ENCODE measurements at regions of chr20 and their contacts with region 1.

Region 1: DNA sequence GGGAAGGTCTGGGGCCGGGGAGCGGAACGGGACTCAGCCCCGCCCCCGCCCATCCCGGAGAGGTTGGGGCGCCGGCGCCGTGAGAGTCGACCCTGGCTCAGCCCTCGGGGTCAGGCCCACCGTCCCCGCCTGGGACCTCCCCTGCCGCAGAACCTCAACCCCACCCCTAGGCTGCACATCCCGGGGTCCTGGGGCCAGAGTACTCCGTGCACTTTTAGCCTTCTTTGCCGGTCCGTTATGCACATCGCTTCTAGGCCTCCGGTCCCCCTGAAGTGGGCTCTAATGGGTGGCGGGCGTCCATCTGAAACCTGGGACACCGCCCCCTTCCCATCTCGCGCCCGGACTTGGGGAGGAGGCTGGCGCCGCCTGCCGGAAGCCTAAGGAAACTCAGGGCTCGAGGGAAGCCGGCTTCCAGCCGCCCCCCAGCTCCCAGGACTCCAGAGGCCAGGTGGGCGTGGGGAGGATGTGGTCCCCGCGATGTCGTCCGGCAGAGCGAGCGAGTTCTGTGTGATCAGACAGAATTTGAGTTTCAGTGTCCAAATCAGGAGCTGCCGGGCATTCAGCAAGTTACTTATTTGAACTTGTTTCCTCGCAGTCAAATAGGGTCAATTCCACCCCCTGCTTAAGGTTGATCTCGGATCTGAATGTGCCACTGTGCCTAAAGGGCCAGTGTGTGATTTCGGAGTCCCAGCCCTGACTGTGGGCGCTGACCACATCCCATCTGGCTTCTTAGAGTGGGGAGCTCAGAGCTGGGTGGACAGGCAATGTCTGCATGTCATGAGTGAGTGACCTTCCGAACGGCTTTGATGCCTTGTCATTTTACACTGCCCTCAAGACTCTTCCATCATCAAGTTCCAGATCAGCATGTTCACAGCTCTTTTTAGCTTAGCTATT is 47.6 kb downstream of the CPXM1 start:
- DNase-seq: peak; percentile 58
- ATAC-seq: peak; percentile 35
- H3K4me3 Mint-ChIP-seq: peak overlapping the region; percentile 74
- H3K27ac Mint-ChIP-seq: no peak overlapping the region
- H3K4me1 Mint-ChIP-seq: peaks cover 31% of the 10 kb centered on the region
- H3K27me3 Mint-ChIP-seq: peaks cover 29% of the 10 kb centered on the region
- CTCF ChIP-seq: peak; percentile 76

Region 2: DNA sequence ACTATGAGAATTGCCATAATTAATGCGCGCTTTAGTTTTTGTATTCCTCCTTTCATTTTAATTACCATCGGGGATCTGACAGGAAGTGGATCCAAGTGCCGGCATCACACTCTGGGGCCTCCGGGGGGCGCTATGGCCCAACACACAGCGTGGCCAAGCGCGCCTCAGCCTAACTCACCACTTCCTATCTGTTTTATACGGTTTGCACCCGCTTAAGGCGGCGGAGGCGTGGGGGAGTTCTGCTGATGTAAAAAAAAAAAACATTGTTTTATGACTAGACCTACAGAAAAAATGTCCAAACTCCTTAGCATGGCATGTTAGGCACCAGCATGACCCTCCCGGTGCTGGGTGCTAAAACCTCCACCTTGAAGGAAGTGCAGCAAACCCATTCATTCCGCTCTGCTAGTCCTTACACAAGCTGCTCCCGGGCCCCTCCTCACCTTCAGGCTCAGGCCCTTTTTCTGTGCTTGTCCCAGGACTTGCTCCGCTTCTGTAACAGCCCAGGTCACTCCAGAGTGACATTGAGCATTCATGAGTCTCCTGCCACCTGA is 64.7 kb before region 1 on chr20:
- CTCF ChIA-PET with region 1: interaction called, 55 read pairs
- POLR2A ChIA-PET with region 1: no interaction called
- intact Hi-C with region 1: no loop called
- DNase-seq: peak; percentile 94
- ATAC-seq: peak; percentile 95
- H3K4me3 Mint-ChIP-seq: no peak overlapping the region
- H3K27ac Mint-ChIP-seq: no peak overlapping the region
- H3K4me1 Mint-ChIP-seq: peaks cover 22% of the 10 kb centered on the region
- H3K27me3 Mint-ChIP-seq: peaks cover 31% of the 10 kb centered on the region
- CTCF ChIP-seq: peak; percentile 94

Region 3: GRCh38 chr20:2693286-2694000 is 59.4 kb before region 1 on chr20:
- CTCF ChIA-PET with region 1: interaction called, 55 read pairs
- POLR2A ChIA-PET with region 1: interaction called, 4 read pairs
- intact Hi-C with region 1: no loop called
- DNase-seq: peak; percentile 47
- ATAC-seq: peak; percentile 69
- H3K4me3 Mint-ChIP-seq: no peak overlapping the region
- H3K27ac Mint-ChIP-seq: no peak overlapping the region
- H3K4me1 Mint-ChIP-seq: peaks cover 12% of the 10 kb centered on the region
- H3K27me3 Mint-ChIP-seq: peaks cover 42% of the 10 kb centered on the region
- CTCF ChIP-seq: no peak

Region 4: DNA sequence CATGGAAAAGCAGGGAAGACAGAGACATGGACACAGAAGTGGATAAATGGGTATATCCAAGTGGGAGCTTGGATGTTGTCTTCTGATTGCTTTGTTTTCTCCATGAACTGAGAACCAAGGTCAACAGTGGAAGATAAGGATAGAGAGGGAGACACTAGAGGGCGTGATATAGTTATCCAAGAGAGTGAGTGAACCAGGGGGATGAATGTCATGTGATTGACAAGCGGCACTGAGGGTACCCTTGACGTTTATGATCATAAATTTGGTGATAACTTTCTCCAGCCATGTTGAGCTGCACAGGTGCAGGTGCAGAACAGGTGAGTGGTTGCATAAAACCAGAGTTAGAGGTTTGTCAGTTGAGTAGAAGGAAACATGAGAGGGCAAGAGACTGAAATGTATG is 39.5 kb before region 1 on chr20:
- CTCF ChIA-PET with region 1: interaction called, 17 read pairs
- POLR2A ChIA-PET with region 1: no interaction called
- intact Hi-C with region 1: no loop called
- DNase-seq: no peak
- ATAC-seq: peak; percentile 80
- H3K4me3 Mint-ChIP-seq: no peak overlapping the region
- H3K27ac Mint-ChIP-seq: no peak overlapping the region
- H3K4me1 Mint-ChIP-seq: no peaks in the 10 kb centered on the region
- H3K27me3 Mint-ChIP-seq: no peaks in the 10 kb centered on the region
- CTCF ChIP-seq: peak; percentile 36

Region 5: DNA sequence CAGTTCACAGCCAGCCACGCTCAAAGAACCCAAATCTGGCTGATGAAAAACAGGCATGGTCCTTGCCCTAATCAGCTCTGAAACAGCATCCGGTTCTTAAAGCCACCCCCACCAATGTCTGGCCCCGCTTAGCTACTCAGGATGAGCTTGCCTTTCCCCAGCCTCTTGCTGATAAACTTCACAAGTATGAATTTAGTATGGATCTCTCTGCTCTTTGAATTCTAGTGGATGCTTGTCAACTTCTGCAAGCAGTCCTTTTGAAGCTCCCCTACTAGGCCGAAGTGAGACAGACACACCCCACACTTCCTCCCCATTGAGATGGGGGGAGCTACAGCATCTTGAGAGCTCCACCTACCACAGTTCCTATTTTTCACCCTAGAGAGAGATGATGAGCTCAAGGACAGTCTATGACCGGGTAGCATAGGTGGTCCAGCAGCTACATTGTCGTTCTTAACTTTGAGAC is 23.5 kb before region 1 on chr20:
- CTCF ChIA-PET with region 1: interaction called, 22 read pairs
- POLR2A ChIA-PET with region 1: interaction called, 4 read pairs
- intact Hi-C with region 1: no loop called
- DNase-seq: peak; percentile 48
- ATAC-seq: peak; percentile 96
- H3K4me3 Mint-ChIP-seq: peak overlapping the region; percentile 33
- H3K27ac Mint-ChIP-seq: peak overlapping the region; percentile 85
- H3K4me1 Mint-ChIP-seq: peaks cover 19% of the 10 kb centered on the region
- H3K27me3 Mint-ChIP-seq: no peaks in the 10 kb centered on the region
- CTCF ChIP-seq: no peak

Region 6: DNA sequence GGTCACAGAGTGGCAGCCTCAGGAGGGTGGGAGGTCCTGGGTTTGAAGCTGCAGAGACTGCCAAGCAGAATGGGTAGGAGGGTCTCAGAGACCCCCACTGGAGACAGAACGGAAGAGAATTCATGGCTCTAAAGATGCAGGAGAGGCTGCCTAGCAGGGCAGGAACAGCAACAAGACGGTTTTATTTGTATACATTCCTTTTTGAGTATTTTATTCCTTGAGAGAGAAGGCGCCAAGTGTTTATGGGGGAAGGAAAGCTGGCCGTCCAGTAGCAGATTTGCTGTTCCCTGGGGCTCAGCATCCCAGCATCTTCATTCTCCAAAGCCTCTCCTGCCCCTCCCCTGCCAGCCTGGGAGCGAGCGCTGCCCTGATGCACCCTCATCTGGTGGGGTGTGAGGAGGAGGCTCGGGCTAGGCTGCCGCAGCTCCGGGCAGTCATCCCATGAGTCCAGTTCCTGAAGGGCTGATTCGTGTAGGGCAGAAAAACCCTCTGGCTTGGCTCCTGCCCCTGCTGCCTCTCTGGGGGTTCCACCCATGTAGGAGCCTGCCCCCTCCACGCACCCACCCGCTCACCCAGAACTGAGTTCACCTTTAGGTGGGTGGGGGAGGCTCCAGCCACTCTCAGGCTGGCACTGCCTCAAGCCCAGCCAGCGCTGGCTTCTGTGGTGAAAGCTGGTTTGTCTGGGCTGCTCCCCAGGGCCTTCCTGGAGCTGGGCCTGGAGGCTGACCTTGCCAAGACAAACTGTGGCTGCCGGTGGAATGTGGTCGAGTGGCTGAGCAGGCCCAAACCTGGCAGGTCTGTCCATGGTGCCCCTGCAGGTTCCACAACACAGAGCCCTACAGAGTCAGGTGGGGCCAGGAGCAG is 15.2 kb after region 1 on chr20:
- CTCF ChIA-PET with region 1: interaction called, 14 read pairs
- POLR2A ChIA-PET with region 1: no interaction called
- intact Hi-C with region 1: no loop called
- DNase-seq: no peak
- ATAC-seq: no peak
- H3K4me3 Mint-ChIP-seq: no peak overlapping the region
- H3K27ac Mint-ChIP-seq: no peak overlapping the region
- H3K4me1 Mint-ChIP-seq: peaks cover 7% of the 10 kb centered on the region
- H3K27me3 Mint-ChIP-seq: peaks cover 8% of the 10 kb centered on the region
- CTCF ChIP-seq: no peak

Region 7: GRCh38 chr20:2814587-2815051 is 61.8 kb after region 1 on chr20 and contains the start of gene C20orf141:
- CTCF ChIA-PET with region 1: no interaction called
- POLR2A ChIA-PET with region 1: no interaction called
- intact Hi-C with region 1: no loop called
- DNase-seq: no peak
- ATAC-seq: no peak
- H3K4me3 Mint-ChIP-seq: no peak within 1 kb of the TSS
- H3K27ac Mint-ChIP-seq: no peak within 1 kb of the TSS
- H3K4me1 Mint-ChIP-seq: no peaks in the 10 kb centered on the region
- H3K27me3 Mint-ChIP-seq: peaks cover 18% of the 10 kb centered on the region
- CTCF ChIP-seq: no peak
- total RNA-seq, gene C20orf141: not detected

Region 8: GRCh38 chr20:2849529-2849928 is 96.7 kb after region 1 on chr20:
- CTCF ChIA-PET with region 1: interaction called, 10 read pairs
- POLR2A ChIA-PET with region 1: no interaction called
- intact Hi-C with region 1: no loop called
- DNase-seq: no peak
- ATAC-seq: peak; percentile 28
- H3K4me3 Mint-ChIP-seq: no peak overlapping the region
- H3K27ac Mint-ChIP-seq: no peak overlapping the region
- H3K4me1 Mint-ChIP-seq: peaks cover 38% of the 10 kb centered on the region
- H3K27me3 Mint-ChIP-seq: no peaks in the 10 kb centered on the region
- CTCF ChIP-seq: no peak

Region 9: GRCh38 chr20:2967841-2968240 is 215.0 kb after region 1 on chr20:
- CTCF ChIA-PET with region 1: no interaction called
- POLR2A ChIA-PET with region 1: no interaction called
- intact Hi-C with region 1: no loop called
- DNase-seq: no peak
- ATAC-seq: no peak
- H3K4me3 Mint-ChIP-seq: no peak overlapping the region
- H3K27ac Mint-ChIP-seq: no peak overlapping the region
- H3K4me1 Mint-ChIP-seq: no peaks in the 10 kb centered on the region
- H3K27me3 Mint-ChIP-seq: no peaks in the 10 kb centered on the region
- CTCF ChIP-seq: no peak

Region 10: DNA sequence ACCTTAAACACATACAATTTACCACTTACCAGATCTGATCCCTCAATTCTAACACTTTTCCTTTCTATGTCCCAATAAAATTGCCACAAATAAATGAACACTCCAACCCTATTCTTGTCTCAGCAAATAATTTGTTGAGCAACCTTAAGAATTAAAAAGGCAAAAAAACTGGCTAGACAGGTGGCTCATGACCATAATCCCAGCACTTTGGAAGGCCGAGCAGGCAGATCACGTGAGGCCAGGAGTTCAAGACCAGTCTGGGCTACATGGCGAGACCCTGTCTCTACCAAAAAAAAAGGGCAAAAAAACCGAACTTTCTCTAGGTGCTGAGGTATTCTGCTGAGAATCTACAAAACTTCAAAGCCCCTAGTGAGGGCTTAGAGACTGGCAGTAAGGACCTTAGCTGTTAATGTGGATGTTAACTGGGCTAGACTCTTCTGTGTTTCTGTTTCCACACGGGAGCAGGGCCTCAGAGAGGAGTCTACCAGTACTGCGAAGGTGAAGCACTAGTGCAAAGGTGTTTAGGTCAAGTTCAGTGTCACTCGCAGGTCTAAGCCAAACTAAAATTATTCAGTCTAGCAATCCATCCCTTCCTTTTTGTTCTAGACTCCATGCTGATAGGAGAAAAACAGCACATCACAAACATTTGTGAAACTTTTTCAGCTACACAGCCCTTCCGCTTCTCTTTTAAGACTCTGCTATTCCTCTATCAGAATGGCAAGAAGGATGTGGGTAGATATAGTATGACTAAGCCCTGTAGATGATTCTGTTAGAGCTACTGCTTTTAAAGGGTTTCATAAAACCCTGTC is 404.2 kb after region 1 on chr20:
- CTCF ChIA-PET with region 1: no interaction called
- POLR2A ChIA-PET with region 1: no interaction called
- intact Hi-C with region 1: no loop called
- DNase-seq: peak; percentile 39
- ATAC-seq: peak; percentile 88
- H3K4me3 Mint-ChIP-seq: peak overlapping the region; percentile 94
- H3K27ac Mint-ChIP-seq: peak overlapping the region; percentile 88
- H3K4me1 Mint-ChIP-seq: peaks cover 50% of the 10 kb centered on the region
- H3K27me3 Mint-ChIP-seq: no peaks in the 10 kb centered on the region
- CTCF ChIP-seq: no peak

Measured in activated CD8-positive, alpha-beta T cell treated with anti-CD3 and anti-CD28 coated beads for 36 hours (primary cell).